ENCODE measurements at regions of chr5 and their contacts with region 1.

Region 1: GRCh38 chr5:148730943-148731861 is 76.9 kb upstream of the HTR4 start:
- DNase-seq: peak; percentile 23 to 77 (median 63)
- ATAC-seq: peak; percentile 98
- H3K4me3 ChIP-seq: no peak overlapping the region
- H3K4me3 Mint-ChIP-seq: peak overlapping the region in 2 of 10 donors; percentile 40 to 61
- H3K27ac ChIP-seq: no peak overlapping the region
- H3K27ac Mint-ChIP-seq: no peak overlapping the region
- H3K4me1 ChIP-seq: no peaks in the 10 kb centered on the region
- H3K4me1 Mint-ChIP-seq: peaks cover 0 to 8% (median 5%) of the 10 kb centered on the region in 7 donors
- H3K27me3 ChIP-seq: no peaks in the 10 kb centered on the region
- H3K27me3 Mint-ChIP-seq: peaks cover 4 to 25% (median 9%) of the 10 kb centered on the region in 5 donors

Region 2: DNA sequence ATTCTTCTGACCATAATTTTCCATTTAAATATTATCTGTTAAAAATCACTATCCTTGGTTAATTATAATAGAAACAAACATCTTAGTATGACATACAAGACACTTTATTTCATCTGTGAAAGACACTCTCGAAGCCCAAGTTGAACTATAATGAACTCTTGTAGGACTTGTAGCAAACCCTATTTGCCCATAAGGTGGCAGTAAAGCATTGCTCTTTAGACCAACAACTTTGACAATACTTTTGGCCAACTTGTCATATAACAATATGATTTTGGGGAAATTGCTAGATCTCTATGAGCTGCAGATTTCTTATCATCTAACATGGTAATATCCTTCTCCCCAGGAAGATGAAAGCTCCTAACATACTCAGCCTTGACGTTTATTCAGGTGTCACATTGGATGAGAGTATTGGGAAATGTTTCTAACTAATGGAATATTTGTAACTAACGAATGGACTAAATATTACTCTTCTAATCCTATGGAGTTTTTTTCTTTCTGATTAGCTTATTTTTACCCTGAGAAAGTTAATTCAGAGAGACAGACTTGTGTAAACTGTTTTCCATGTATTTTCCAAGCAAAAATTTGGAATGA is 551.9 kb before region 1 on chr5:
- CTCF ChIA-PET with region 1: interaction called, 12 read pairs
- POLR2A ChIA-PET with region 1: no interaction called
- intact Hi-C with region 1: loop called (anchors 1 kb)
- DNase-seq: peak in 7 of 9 donors; percentile 10 to 53 (median 36)
- ATAC-seq: peak; percentile 75
- H3K4me3 ChIP-seq: no peak overlapping the region
- H3K4me3 Mint-ChIP-seq: no peak overlapping the region
- H3K27ac ChIP-seq: no peak overlapping the region
- H3K27ac Mint-ChIP-seq: no peak overlapping the region
- H3K4me1 ChIP-seq: no peaks in the 10 kb centered on the region
- H3K4me1 Mint-ChIP-seq: peaks cover 0 to 2% (median 0%) of the 10 kb centered on the region in 7 donors
- H3K27me3 ChIP-seq: no peaks in the 10 kb centered on the region
- H3K27me3 Mint-ChIP-seq: peaks cover 11 to 25% (median 12%) of the 10 kb centered on the region in 5 donors

Region 3: DNA sequence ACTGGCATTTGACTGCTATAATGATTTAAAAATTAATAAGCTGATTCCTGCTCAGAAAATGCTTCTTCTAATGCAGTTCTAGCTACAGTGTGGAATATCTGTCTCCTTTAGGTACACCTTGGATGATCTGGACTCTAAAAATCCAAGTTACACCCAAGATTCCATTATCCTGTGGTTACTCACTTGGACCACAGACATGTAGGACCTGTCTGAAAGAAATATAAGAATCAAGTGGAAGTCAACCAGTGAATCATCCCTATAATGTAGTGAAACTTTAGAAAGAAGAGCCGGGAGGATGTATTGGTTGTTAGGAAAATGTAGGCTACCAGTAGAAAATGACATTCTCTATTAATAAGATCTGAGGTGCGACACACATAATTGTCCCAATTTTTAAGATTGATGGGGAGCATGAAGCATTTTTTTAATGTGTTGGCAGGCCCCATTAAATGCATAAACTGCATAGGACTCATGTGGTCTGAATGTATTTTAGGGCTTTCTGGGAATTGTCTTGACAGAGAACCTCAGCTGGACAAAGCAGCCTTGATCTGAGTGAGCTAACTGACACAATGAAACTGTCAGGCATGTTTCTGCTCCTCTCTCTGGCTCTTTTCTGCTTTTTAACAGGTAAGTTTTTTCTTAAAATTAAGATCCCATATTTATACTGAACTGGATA is 528.5 kb before region 1 on chr5 and contains the start of gene SPINK6:
- CTCF ChIA-PET with region 1: no interaction called
- POLR2A ChIA-PET with region 1: no interaction called
- intact Hi-C with region 1: no loop called
- DNase-seq: no peak
- ATAC-seq: no peak
- H3K4me3 ChIP-seq: no peak within 1 kb of the TSS
- H3K4me3 Mint-ChIP-seq: no peak within 1 kb of the TSS
- H3K27ac ChIP-seq: no peak within 1 kb of the TSS
- H3K27ac Mint-ChIP-seq: no peak within 1 kb of the TSS
- H3K4me1 ChIP-seq: no peaks in the 10 kb centered on the region
- H3K4me1 Mint-ChIP-seq: peaks cover 0 to 5% (median 0%) of the 10 kb centered on the region in 7 donors
- H3K27me3 ChIP-seq: no peaks in the 10 kb centered on the region
- H3K27me3 Mint-ChIP-seq: peaks cover 0 to 21% (median 11%) of the 10 kb centered on the region in 5 donors
- total RNA-seq, gene SPINK6: not detected

Region 4: DNA sequence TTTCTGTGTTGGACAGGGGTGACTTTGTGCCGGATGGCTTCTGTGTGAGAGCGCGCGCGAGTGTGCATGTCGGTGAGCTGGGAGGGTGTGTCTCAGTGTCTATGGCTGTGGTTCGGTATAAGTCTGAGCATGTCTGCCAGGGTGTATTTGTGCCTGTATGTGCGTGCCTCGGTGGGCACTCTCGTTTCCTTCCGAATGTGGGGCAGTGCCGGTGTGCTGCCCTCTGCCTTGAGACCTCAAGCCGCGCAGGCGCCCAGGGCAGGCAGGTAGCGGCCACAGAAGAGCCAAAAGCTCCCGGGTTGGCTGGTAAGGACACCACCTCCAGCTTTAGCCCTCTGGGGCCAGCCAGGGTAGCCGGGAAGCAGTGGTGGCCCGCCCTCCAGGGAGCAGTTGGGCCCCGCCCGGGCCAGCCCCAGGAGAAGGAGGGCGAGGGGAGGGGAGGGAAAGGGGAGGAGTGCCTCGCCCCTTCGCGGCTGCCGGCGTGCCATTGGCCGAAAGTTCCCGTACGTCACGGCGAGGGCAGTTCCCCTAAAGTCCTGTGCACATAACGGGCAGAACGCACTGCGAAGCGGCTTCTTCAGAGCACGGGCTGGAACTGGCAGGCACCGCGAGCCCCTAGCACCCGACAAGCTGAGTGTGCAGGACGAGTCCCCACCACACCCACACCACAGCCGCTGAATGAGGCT is 95.0 kb after region 1 on chr5 and contains the start of gene ADRB2:
- CTCF ChIA-PET with region 1: interaction called, 5 read pairs
- POLR2A ChIA-PET with region 1: no interaction called
- intact Hi-C with region 1: loop called (anchors 5 kb)
- DNase-seq: peak; percentile 74 to 83 (median 79)
- ATAC-seq: peak; percentile 94
- H3K4me3 ChIP-seq: peak within 1 kb of the TSS; percentile 75
- H3K4me3 Mint-ChIP-seq: peak within 1 kb of the TSS; percentile 83 to 94 (median 89)
- H3K27ac ChIP-seq: peak within 1 kb of the TSS; percentile 54
- H3K27ac Mint-ChIP-seq: peak within 1 kb of the TSS; percentile 16 to 82 (median 70)
- H3K4me1 ChIP-seq: peaks cover 7 to 18% of the 10 kb centered on the region in 2 donors
- H3K4me1 Mint-ChIP-seq: peaks cover 20 to 43% (median 31%) of the 10 kb centered on the region in 7 donors
- H3K27me3 ChIP-seq: no peaks in the 10 kb centered on the region
- H3K27me3 Mint-ChIP-seq: peaks cover 0 to 76% (median 5%) of the 10 kb centered on the region in 5 donors
- total RNA-seq, gene ADRB2: 0.36 to 14.4 (median 1.3) TPM

Region 5: GRCh38 chr5:148998174-148998797 is 267.1 kb after region 1 on chr5:
- CTCF ChIA-PET with region 1: interaction called, 5 read pairs
- POLR2A ChIA-PET with region 1: no interaction called
- intact Hi-C with region 1: loop called (anchors 1 kb)
- DNase-seq: peak in 5 of 9 donors; percentile 5 to 25 (median 17)
- ATAC-seq: peak; percentile 67
- H3K4me3 ChIP-seq: no peak overlapping the region
- H3K4me3 Mint-ChIP-seq: no peak overlapping the region
- H3K27ac ChIP-seq: no peak overlapping the region
- H3K27ac Mint-ChIP-seq: no peak overlapping the region
- H3K4me1 ChIP-seq: no peaks in the 10 kb centered on the region
- H3K4me1 Mint-ChIP-seq: no peaks in the 10 kb centered on the region
- H3K27me3 ChIP-seq: no peaks in the 10 kb centered on the region
- H3K27me3 Mint-ChIP-seq: peaks cover 19 to 61% (median 28%) of the 10 kb centered on the region in 5 donors

Region 6: DNA sequence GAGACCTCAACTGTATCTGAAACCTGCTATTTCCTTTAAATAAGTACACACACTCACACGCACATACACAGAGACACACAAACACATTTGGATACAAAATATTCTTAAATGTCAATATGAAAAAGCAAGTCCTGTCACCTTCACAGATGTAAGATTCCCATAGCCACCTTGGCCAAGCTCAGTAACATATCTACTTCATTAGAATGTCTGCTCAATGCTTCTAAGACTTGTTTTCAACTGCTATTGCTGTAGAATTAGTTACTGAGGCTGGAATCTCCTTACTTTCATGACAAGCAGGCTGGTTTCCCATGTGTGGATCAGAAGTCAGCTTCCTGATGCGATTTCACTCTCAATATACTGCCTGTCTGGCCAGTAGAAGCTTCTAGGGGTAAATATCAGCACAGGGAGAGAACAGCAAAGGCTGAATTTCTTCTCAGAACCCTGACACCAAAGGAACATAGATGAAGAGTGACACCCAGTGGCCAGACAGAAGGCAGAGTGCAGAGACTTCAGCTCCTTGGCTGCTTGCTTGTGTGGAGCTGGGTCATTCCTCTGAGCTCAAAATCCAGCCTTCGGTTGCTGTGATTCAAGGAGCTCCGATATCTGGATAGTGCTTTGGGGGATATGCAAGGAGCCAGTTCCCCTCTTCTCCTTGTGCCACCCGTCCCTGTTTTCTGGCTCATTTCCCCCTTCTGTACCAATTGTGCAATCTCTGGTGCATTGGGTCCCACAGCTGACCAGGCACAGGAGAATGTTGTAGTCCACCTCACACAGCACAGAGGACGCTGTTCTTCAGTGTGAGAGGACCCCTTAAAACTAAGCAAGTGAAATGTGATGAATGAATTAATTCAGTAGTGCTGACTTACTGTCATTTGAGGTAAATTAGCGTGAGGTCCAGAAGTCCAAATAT is 383.5 kb after region 1 on chr5:
- CTCF ChIA-PET with region 1: interaction called, 10 read pairs
- POLR2A ChIA-PET with region 1: no interaction called
- intact Hi-C with region 1: loop called (anchors 1 kb)
- DNase-seq: peak in 5 of 9 donors; percentile 27 to 45 (median 32)
- ATAC-seq: peak; percentile 76
- H3K4me3 ChIP-seq: no peak overlapping the region
- H3K4me3 Mint-ChIP-seq: no peak overlapping the region
- H3K27ac ChIP-seq: no peak overlapping the region
- H3K27ac Mint-ChIP-seq: no peak overlapping the region
- H3K4me1 ChIP-seq: no peaks in the 10 kb centered on the region
- H3K4me1 Mint-ChIP-seq: peaks cover 0 to 1% (median 0%) of the 10 kb centered on the region in 7 donors
- H3K27me3 ChIP-seq: no peaks in the 10 kb centered on the region
- H3K27me3 Mint-ChIP-seq: peaks cover 19 to 31% (median 27%) of the 10 kb centered on the region in 5 donors

Measured in naive thymus-derived CD4-positive, alpha-beta T cell (primary cell).